ENCODE measurements at regions of chr16 and their contacts with region 1.

Region 1: DNA sequence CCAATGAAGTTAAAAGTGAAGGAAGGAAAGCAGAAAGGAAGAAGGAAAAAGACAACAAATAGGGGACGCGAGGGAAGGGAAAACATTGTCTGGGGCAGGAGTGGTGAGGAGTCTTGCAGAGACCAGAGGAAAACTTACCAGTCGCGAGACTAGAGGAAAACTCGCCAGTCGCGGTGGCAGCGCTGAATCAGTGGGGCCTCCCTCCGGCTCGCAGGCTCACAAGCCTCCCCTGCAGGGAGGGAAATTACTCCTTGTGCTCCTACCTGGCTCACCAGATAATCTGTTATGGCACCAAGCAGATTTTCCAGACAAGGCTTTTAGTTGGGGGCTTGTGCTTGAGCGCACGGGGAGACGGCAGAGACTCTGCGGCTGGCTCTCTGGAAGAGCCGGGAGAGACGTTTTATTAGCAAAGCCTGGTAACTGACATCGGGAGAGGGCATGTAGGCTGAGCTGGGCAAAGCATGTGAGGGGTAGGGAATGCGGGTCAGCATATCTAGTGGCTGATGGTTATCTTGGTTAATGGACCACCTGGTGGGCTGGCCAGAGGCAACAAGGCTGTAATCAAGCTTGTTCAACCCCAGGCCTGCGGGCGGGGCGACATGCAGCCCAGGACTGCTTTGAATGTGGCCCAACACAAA is 37.1 kb downstream of the LCMT1 start:
- DNase-seq: no peak
- H3K4me3 ChIP-seq: no peak overlapping the region
- CTCF ChIP-seq: no peak

Region 2: GRCh38 chr16:25235991-25236390 is 87.3 kb after region 1 on chr16:
- in situ Hi-C with region 1: loop called (anchors 5 kb)
- DNase-seq: no peak
- H3K4me3 ChIP-seq: no peak overlapping the region
- CTCF ChIP-seq: no peak